HCT116 (cell line): ENCODE measurements at regions of chr1 and their contacts with region 1.

Region 1: DNA sequence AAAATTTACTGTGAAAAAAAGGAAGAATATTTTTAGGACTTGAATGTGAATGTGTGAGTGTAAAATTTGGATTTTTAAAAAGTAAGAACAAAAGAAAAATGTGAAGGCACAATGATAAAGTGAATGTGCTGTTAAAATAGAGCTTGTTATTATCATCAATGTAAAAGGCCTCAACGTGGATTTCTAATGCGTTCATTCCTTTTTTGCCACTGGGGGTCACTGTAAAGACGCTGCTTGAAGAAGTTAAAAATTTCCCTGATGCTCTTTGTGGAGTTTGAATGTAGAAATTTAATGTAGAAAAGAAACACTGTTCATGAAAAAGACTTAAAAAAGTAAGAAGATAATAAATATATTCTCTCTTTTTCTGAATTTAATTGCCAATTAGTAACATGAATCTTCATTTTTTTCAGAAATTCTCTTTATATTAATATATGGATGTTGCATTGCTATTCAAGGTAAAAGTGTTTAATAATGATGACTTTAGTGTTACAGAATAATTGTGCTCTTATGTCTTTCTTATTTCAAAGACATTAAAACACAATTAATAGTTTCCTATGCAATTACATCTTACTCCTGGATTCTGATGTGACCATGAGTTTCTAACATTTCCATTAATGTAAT is 161.5 kb downstream of the DNM3 start:
- DNase-seq: peak; percentile 39
- ATAC-seq: no peak
- H3K4me3 ChIP-seq: no peak overlapping the region
- H3K27ac ChIP-seq: no peak overlapping the region
- H3K4me1 ChIP-seq: no peaks in the 10 kb centered on the region
- H3K27me3 ChIP-seq: no peaks in the 10 kb centered on the region
- CTCF ChIP-seq: peak; percentile 65 to 84 (median 75)
- POLR2A ChIP-seq: no peak
- RAD21 ChIP-seq: peak; percentile 80

Region 2: GRCh38 chr1:171801487-171801891 is 201.3 kb before region 1 on chr1:
- CTCF ChIA-PET with region 1: interaction called, 21 read pairs
- POLR2A ChIA-PET with region 1: no interaction called
- RAD21 ChIA-PET with region 1: no interaction called
- intact Hi-C with region 1: no loop called
- DNase-seq: no peak
- ATAC-seq: peak; percentile 81
- H3K4me3 ChIP-seq: no peak overlapping the region
- H3K27ac ChIP-seq: no peak overlapping the region
- H3K4me1 ChIP-seq: peaks cover 0 to 4% of the 10 kb centered on the region in 2 experiments; a peak in 1 of 4 replicates
- H3K27me3 ChIP-seq: no peaks in the 10 kb centered on the region
- CTCF ChIP-seq: peak; percentile 73 to 86 (median 81)
- POLR2A ChIP-seq: no peak
- RAD21 ChIP-seq: peak; percentile 86

Region 3: DNA sequence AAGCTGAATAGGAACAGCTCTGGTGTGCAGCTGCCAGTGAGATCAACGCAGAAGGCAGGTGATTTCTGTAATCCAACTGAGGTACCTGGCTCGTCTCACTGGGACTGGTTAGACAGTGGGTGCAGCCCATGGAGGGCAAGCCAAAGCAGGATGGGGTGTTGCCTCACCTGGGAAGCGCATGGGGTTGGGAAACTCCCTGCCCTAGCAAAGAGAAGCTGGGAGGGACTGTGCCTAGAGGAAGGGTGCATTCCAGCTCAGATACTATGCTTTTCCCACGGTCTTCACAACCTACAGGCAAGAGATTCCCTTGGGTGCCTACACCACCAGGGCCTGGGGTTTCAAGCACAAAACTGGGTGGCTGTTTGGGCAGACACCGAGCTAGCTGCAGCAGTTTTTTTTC is 21.7 kb after region 1 on chr1:
- CTCF ChIA-PET with region 1: interaction called, 11 read pairs
- POLR2A ChIA-PET with region 1: no interaction called
- RAD21 ChIA-PET with region 1: no interaction called
- intact Hi-C with region 1: no loop called
- DNase-seq: no peak
- ATAC-seq: no peak
- H3K4me3 ChIP-seq: no peak overlapping the region
- H3K27ac ChIP-seq: no peak overlapping the region
- H3K4me1 ChIP-seq: no peaks in the 10 kb centered on the region
- H3K27me3 ChIP-seq: no peaks in the 10 kb centered on the region
- CTCF ChIP-seq: no peak
- POLR2A ChIP-seq: no peak
- RAD21 ChIP-seq: no peak

Region 4: GRCh38 chr1:172095846-172096245 is 93.0 kb after region 1 on chr1:
- CTCF ChIA-PET with region 1: no interaction called
- POLR2A ChIA-PET with region 1: no interaction called
- RAD21 ChIA-PET with region 1: no interaction called
- intact Hi-C with region 1: no loop called
- DNase-seq: no peak
- ATAC-seq: no peak
- H3K4me3 ChIP-seq: no peak overlapping the region
- H3K27ac ChIP-seq: no peak overlapping the region
- H3K4me1 ChIP-seq: no peaks in the 10 kb centered on the region
- H3K27me3 ChIP-seq: no peaks in the 10 kb centered on the region
- CTCF ChIP-seq: no peak
- POLR2A ChIP-seq: no peak
- RAD21 ChIP-seq: no peak

Region 5: DNA sequence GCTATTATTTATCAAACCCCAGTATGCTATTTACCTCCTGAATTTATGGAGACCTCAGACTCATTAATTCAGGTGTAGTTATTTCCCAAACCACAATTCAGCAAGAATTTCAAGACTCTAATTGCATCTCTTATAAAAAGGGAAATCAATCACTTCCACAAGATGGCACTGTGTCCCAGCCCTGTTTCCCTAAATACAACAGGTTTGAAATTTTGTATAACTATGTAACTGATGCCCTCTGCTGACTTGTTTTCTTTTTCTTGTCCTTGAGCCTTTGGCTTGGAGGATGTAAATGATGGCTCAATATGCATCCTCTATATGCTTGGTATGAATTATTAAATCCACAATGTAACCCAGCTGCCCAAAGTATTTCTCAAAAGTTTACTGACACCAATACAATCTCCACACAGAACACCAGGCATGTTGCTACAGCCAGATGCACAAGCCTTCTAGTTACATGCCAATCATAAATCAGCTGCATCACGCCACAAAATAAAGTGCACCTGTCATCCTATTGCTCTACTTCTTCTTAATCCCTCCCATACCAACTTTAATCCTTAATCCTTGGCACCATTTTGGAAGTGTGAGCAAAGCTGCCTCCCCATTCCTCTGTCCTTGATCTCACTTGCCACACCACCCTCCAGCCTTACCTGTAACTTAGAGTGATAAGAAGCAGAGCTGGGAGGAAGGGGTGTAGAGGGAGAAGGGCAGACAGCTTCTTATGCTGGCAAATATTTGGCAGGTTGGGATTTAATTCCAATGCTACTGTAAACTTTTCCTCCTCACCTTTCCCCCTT is 426.7 kb after region 1 on chr1:
- CTCF ChIA-PET with region 1: interaction called, 10 read pairs
- POLR2A ChIA-PET with region 1: no interaction called
- RAD21 ChIA-PET with region 1: no interaction called
- intact Hi-C with region 1: loop called (anchors 1 kb)
- DNase-seq: peak; percentile 63
- ATAC-seq: peak; percentile 88
- H3K4me3 ChIP-seq: no peak overlapping the region
- H3K27ac ChIP-seq: no peak overlapping the region
- H3K4me1 ChIP-seq: no peaks in the 10 kb centered on the region
- H3K27me3 ChIP-seq: no peaks in the 10 kb centered on the region
- CTCF ChIP-seq: peak; percentile 74 to 99 (median 88)
- POLR2A ChIP-seq: no peak
- RAD21 ChIP-seq: peak; percentile 92

Region 6: GRCh38 chr1:172713466-172713865 is 710.6 kb after region 1 on chr1:
- CTCF ChIA-PET with region 1: interaction called, 3 read pairs
- POLR2A ChIA-PET with region 1: no interaction called
- RAD21 ChIA-PET with region 1: no interaction called
- intact Hi-C with region 1: loop called (anchors 5 kb)
- DNase-seq: no peak
- ATAC-seq: no peak
- H3K4me3 ChIP-seq: no peak overlapping the region
- H3K27ac ChIP-seq: no peak overlapping the region
- H3K4me1 ChIP-seq: no peaks in the 10 kb centered on the region
- H3K27me3 ChIP-seq: no peaks in the 10 kb centered on the region
- CTCF ChIP-seq: no peak
- POLR2A ChIP-seq: no peak
- RAD21 ChIP-seq: no peak